ENCODE measurements at regions of chr2 and their contacts with region 1.

Region 1: DNA sequence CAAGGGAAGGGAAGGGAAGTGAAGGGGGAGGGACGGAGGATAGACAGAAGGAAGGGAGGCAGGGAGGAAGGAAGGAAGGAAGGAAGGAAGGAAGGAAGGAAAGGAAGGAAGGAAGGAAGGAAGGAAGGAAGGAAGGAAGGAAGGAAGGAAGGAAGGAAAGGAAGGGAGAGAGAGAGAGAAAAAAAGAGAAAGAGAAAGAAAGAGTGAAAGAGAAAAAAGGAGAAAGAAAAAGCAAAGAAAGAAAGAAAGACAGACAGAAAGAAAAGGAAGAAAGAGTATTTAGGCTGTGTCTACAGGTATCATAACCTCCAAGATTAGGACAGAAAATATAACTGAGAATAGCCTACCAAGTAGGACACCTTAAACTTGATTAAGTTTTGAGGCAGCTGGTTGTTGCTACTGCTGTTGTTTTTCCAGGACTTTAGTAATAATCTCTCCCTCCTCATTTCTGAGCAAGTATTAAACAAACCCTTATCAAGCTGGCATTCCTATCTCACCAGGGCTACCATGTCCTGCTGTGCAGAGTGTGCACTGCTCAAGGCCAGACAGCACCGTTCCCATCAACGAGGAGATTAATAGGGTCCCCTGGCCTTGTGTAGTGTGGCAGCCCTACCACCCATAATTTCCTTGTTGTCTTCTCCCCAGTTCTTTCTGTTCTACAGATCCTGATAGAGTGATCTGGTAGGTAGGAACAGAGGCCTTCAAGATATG is 90.5 kb upstream of the FHL2 start:
- DNase-seq: no peak
- ATAC-seq: no peak
- H3K4me3 ChIP-seq: no peak overlapping the region
- H3K27ac ChIP-seq: peak overlapping the region; percentile 1
- H3K4me1 ChIP-seq: peaks cover 12% of the 10 kb centered on the region
- H3K27me3 ChIP-seq: no peaks in the 10 kb centered on the region
- CTCF ChIP-seq: no peak

Region 2: DNA sequence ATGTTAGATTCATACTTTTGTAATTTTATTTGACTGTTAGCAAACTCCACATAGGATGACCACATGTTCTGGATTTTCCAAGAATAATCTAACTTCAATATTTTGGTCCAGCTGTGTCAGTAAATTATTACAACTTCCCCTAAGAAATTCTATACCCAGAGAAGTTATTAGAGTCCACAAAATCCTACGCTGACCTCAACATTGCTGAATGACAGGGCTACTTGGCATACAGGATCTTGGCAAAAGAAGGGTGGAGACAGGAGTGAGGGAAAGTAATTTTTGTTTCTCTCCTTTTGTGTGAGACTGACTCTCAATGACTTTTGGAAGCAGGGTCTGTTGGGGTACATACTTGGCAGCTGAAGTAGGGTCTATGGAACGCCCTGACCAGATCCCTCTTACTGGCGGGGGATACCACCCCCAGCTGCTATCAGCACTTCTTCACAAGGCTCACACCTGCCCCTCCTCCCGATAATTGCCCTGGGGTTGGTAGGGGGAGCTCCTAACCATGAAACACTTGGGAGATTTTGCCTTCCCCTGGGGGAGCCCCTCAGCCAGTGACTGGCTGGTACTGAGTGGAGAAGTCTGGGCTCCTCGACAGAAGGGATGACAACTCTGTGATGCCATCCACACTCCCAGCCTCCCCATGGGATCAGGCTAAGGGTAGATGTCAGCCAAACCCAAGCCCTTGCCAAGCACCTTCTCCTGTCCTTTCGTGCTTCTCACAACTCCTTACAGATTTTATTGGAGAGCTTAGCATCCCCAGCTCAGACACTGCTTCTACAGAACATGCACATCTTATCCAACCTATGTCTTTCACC is 20.2 kb after region 1 on chr2:
- intact Hi-C with region 1: loop called in 1 of 2 experiments (anchors 1 kb)
- DNase-seq: no peak
- ATAC-seq: peak; percentile 55 to 74 (median 65)
- H3K4me3 ChIP-seq: no peak overlapping the region
- H3K27ac ChIP-seq: no peak overlapping the region
- H3K4me1 ChIP-seq: peaks cover 15% of the 10 kb centered on the region
- H3K27me3 ChIP-seq: no peaks in the 10 kb centered on the region
- CTCF ChIP-seq: no peak